Kidney (tissue), 22 donors: ENCODE measurements at regions of chr1 and their contacts with region 1.

Region 1: DNA sequence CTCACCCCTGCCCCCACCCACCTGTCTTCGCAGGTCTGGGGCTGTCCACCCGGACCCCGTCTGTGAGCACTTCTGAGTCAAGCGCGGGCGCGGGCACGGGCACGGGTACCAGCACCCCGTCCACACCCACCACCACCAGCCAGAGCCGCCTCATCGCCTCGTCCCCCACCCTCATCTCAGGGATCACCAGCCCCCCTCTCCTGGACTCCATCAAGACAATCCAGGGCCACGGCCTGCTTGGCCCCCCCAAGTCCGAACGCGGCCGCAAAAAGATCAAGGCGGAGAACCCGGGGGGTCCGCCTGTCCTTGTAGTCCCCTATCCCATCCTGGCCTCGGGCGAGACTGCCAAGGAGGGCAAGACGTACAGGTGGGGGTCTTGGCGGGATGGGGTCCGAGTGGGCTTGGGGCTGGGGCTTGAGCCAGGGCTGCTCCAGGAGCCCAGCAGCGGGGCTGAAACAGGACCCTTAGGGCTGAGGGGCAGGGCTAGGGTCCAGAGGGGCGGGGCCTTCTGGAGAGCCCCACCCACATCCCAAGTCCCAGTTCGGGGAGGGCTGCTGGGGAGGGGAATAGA is 23.9 kb downstream of the ZNF362 start:
- DNase-seq: no peak
- H3K4me3 ChIP-seq: no peak overlapping the region
- H3K27ac ChIP-seq: no peak overlapping the region
- H3K4me1 ChIP-seq: peaks cover 0 to 4% (median 0%) of the 10 kb centered on the region in 3 donors
- H3K27me3 ChIP-seq: no peaks in the 10 kb centered on the region
- CTCF ChIP-seq: no peak

Region 2: GRCh38 chr1:33127001-33127791 is 153.0 kb before region 1 on chr1:
- intact Hi-C with region 1: loop called (anchors 10 kb)
- DNase-seq: peak; percentile 98 to 100 (median 99)
- H3K4me3 ChIP-seq: peak overlapping the region; percentile 96 to 100 (median 100)
- H3K27ac ChIP-seq: peak overlapping the region; percentile 83 to 94
- H3K4me1 ChIP-seq: peaks cover 0 to 14% (median 5%) of the 10 kb centered on the region in 3 donors
- H3K27me3 ChIP-seq: no peaks in the 10 kb centered on the region
- CTCF ChIP-seq: peak; percentile 88

Region 3: GRCh38 chr1:33211972-33212371 is 68.2 kb before region 1 on chr1:
- intact Hi-C with region 1: no loop called
- DNase-seq: no peak
- H3K4me3 ChIP-seq: no peak overlapping the region
- H3K27ac ChIP-seq: no peak overlapping the region
- H3K4me1 ChIP-seq: no peaks in the 10 kb centered on the region
- H3K27me3 ChIP-seq: no peaks in the 10 kb centered on the region
- CTCF ChIP-seq: no peak

Region 4: DNA sequence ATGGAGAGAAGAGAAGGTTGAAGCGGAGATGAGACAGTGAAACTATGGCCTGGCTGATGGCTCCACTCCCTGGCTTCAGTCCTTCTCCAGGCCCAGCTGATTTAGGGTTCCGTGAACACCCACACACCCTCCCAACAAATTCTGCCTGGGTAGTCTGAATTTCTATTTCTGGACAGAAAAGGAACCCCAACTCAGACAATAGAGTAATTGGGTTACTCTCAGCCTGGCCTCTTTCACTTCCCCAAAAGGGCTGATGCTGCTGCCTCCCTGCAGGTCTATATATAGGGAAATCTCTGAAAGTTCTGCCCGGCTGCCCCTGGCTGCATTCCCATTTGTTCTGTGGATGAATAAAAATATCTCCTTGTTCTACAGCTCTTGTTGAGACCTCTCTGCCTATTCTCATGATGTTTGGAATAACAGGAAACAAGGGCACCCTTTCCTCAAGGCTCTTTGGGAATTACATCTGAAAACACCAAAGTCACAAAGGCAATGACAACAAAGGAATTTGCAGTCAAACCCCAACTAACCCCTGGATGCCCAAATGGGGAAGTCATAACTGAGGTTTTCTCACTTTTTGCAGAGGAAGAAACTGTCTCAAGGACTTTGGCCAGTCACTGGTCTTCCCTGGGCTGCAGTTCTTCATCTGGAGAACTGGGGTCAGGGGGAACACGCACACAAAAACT is 180.9 kb after region 1 on chr1:
- intact Hi-C with region 1: loop called (anchors 10 kb)
- DNase-seq: no peak
- H3K4me3 ChIP-seq: no peak overlapping the region
- H3K27ac ChIP-seq: no peak overlapping the region
- H3K4me1 ChIP-seq: peaks cover 0 to 3% (median 0%) of the 10 kb centered on the region in 3 donors
- H3K27me3 ChIP-seq: no peaks in the 10 kb centered on the region
- CTCF ChIP-seq: no peak